ENCODE measurements at regions of chr17 and their contacts with region 1.

Region 1: GRCh38 chr17:43576563-43577229 is 30.6 kb upstream of the ETV4 start:
- DNase-seq: peak; percentile 11 to 87 (median 53)
- ATAC-seq: peak; percentile 60 to 86 (median 74)
- H3K4me3 ChIP-seq: no peak overlapping the region
- H3K4me3 Mint-ChIP-seq: no peak overlapping the region
- H3K27ac ChIP-seq: no peak overlapping the region
- H3K27ac Mint-ChIP-seq: no peak overlapping the region
- H3K4me1 ChIP-seq: peaks cover 4 to 17% of the 10 kb centered on the region in 2 experiments
- H3K4me1 Mint-ChIP-seq: peaks cover 15 to 21% (median 16%) of the 10 kb centered on the region in 3 donors
- H3K27me3 ChIP-seq: peaks cover 0 to 9% of the 10 kb centered on the region in 2 experiments
- H3K27me3 Mint-ChIP-seq: peaks cover 2 to 6% of the 10 kb centered on the region in 2 donors

Region 2: DNA sequence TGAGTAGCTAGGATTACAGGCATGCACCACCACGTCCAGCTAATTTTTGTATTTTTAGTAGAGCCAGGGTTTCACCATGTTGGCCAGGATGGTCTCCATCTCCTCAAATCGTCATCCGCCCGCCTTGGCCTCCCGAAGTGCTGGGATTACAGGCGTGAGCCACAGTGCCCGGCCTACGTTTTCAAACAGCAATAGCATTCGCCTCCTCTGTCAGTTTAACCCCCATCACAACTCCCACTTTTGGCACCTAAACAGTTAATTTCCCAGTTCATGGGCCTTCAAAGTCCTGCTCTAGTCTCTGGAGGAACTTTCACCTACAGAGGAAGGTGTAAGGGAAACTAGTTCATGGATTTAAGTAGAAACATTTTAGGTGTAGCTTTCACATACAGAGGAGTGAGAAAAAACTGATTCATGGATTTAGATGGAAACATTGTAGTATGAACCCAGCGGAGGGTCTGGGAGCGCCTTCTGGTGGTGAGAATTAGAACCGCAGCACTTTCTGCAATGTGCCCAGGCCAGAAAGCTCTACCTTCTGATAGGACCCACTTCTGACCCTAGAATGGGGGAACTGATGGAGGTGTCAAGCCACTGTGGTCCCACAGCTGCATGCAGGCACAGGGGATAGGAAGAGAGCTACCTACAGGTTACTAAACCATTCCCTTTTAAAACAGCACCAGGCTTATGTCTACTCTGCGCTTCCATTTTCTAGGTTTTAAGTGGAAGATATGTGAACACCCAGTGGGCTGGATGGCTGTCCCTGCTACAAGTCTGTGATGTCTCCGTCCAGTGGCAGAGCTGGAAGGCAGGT is 97.0 kb after region 1 on chr17:
- CTCF ChIA-PET with region 1: interaction called in 1 of 2 experiments, 27 read pairs
- POLR2A ChIA-PET with region 1: no interaction called
- DNase-seq: peak; percentile 13 to 82 (median 62)
- ATAC-seq: peak; percentile 56 to 68 (median 66)
- H3K4me3 ChIP-seq: no peak overlapping the region
- H3K4me3 Mint-ChIP-seq: no peak overlapping the region
- H3K27ac ChIP-seq: no peak overlapping the region
- H3K27ac Mint-ChIP-seq: no peak overlapping the region
- H3K4me1 ChIP-seq: peaks cover 0 to 16% of the 10 kb centered on the region in 2 experiments
- H3K4me1 Mint-ChIP-seq: peaks cover 12 to 18% (median 15%) of the 10 kb centered on the region in 3 donors
- H3K27me3 ChIP-seq: peaks cover 0 to 4% of the 10 kb centered on the region in 2 experiments
- H3K27me3 Mint-ChIP-seq: peaks cover 7 to 13% of the 10 kb centered on the region in 2 donors

Region 3: GRCh38 chr17:43680461-43680860 is 103.8 kb after region 1 on chr17:
- CTCF ChIA-PET with region 1: interaction called in 1 of 2 experiments, 13 read pairs
- POLR2A ChIA-PET with region 1: no interaction called
- DNase-seq: no peak
- ATAC-seq: no peak
- H3K4me3 ChIP-seq: no peak overlapping the region
- H3K4me3 Mint-ChIP-seq: no peak overlapping the region
- H3K27ac ChIP-seq: no peak overlapping the region
- H3K27ac Mint-ChIP-seq: no peak overlapping the region
- H3K4me1 ChIP-seq: peaks cover 0 to 7% of the 10 kb centered on the region in 2 experiments
- H3K4me1 Mint-ChIP-seq: peaks cover 5 to 8% (median 6%) of the 10 kb centered on the region in 3 donors
- H3K27me3 ChIP-seq: peaks cover 0 to 13% of the 10 kb centered on the region in 2 experiments
- H3K27me3 Mint-ChIP-seq: peaks cover 10 to 12% of the 10 kb centered on the region in 2 donors